ENCODE measurements at regions of chr11 and their contacts with region 1.

Region 1: DNA sequence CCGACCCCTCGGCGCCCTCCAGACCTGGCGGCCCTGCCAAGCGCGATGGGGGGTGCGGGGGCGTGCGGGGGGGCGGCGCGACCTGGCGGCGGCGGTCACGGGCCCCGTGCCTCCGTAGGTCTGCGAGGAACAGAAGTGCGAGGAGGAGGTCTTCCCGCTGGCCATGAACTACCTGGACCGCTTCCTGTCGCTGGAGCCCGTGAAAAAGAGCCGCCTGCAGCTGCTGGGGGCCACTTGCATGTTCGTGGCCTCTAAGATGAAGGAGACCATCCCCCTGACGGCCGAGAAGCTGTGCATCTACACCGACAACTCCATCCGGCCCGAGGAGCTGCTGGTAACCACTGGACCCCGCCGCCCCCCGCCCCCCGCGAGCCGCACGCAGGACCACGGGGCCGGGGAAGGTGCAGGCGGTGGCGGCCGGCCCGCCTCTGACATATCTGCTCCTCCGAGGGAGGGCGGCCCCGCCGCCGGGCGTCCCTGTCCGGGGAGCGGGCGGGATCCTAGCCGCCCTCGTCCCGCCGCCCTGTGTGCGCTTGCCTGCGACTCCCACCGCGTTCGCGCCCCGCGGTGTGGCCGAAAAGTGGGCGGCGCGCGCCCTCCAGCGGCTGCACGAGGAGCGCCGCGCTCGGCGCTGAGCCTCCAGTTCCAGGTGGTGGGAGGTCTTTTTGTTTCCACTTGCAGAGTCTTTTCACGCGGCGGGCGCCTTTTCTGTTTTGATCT is 2.1 kb downstream of the CCND1 start:
- DNase-seq: no peak
- H3K4me3 ChIP-seq: peak overlapping the region; percentile 78 to 90 (median 84)
- H3K27ac ChIP-seq: peak overlapping the region; percentile 89 to 94 (median 92)
- H3K4me1 ChIP-seq: peaks cover 50 to 84% (median 77%) of the 10 kb centered on the region in 4 donors
- H3K27me3 ChIP-seq: peaks cover 3 to 39% (median 7%) of the 10 kb centered on the region in 4 donors
- CTCF ChIP-seq: peak; percentile 93 to 97 (median 94)
- EP300 ChIP-seq: no peak
- POLR2A ChIP-seq: no peak

Region 2: GRCh38 chr11:69101115-69101791 is 541.8 kb before region 1 on chr11:
- intact Hi-C with region 1: loop called (anchors 2 kb)
- DNase-seq: no peak
- H3K4me3 ChIP-seq: no peak overlapping the region
- H3K27ac ChIP-seq: no peak overlapping the region
- H3K4me1 ChIP-seq: peaks cover 5 to 26% (median 21%) of the 10 kb centered on the region in 4 donors
- H3K27me3 ChIP-seq: no peaks in the 10 kb centered on the region
- CTCF ChIP-seq: peak; percentile 97 to 100 (median 97)
- EP300 ChIP-seq: no peak
- POLR2A ChIP-seq: no peak

Region 3: GRCh38 chr11:69131644-69132300 is 511.3 kb before region 1 on chr11:
- intact Hi-C with region 1: loop called (anchors 5 kb)
- DNase-seq: no peak
- H3K4me3 ChIP-seq: no peak overlapping the region
- H3K27ac ChIP-seq: no peak overlapping the region
- H3K4me1 ChIP-seq: peaks cover 15 to 19% (median 18%) of the 10 kb centered on the region in 4 donors
- H3K27me3 ChIP-seq: no peaks in the 10 kb centered on the region
- CTCF ChIP-seq: peak; percentile 69 to 89 (median 86)
- EP300 ChIP-seq: no peak
- POLR2A ChIP-seq: no peak

Region 4: DNA sequence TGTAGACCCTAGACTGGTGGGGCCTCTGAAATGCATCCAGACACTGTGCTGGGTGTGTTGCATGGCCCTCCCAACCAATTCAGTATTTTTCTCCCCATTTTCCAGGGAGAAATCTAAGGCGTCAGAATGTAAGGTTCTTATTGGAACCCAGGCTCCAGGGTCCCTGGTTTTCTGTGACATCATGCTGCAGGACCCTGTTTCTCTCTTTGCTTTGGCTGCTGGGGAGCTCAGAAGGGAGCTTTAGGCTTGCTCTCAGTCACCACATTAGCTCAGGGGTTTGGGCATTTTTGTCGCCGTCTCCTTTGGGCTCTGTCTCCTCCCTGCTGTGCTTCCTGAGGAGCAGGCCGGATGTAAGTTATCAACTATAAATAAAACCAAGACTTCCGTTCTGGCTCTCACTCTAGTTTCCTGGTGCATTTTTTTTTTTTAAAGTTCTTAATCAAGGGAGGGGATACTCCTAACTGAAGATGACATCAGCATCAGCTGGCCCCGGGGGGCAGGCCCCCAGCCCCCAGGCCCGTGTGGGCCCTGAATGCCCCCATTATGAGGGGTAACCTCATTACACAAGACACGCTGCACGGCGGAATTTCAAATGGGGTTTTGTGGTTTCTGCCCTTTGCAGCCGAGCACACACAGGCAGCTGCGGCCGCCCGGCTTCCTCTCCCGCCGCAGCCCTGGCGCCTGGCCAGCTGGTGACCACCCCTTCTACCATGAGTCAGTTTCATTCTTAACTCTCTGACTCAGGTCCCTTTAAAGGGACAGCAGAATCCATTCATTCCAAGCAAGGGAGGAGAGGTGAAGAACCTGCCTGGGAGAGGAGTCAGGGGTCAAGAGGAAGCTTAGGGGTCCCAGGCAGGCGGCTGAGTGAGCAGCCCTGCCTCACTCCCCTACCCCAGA is 345.9 kb before region 1 on chr11:
- intact Hi-C with region 1: loop called (anchors 5 kb)
- DNase-seq: peak; percentile 97
- H3K4me3 ChIP-seq: peak overlapping the region; percentile 26 to 32 (median 28)
- H3K27ac ChIP-seq: peak overlapping the region; percentile 66 to 79 (median 74)
- H3K4me1 ChIP-seq: peaks cover 40 to 72% (median 56%) of the 10 kb centered on the region in 4 donors
- H3K27me3 ChIP-seq: peaks cover 0 to 18% (median 0%) of the 10 kb centered on the region in 4 donors
- CTCF ChIP-seq: no peak
- EP300 ChIP-seq: no peak
- POLR2A ChIP-seq: no peak

Region 5: DNA sequence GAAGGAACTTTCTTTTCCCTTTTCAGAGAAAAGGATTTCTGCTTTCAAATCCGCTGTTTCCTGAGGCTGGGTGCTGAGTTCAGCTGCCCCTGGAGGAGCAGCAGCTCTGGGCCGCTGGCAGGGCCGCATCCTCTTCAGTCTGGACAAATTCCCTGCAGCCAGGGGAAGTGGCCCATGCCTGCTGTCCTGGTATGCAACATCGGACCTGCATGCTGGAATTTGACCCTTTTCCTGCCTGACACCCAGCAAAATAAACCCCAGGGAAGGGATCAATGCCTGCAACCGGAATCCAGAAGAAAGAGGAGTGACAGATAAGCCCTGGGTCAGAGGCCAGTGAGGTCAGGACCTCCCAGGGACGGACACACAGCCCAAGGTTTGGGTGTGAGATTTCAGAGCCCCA is 215.7 kb before region 1 on chr11:
- intact Hi-C with region 1: no loop called
- DNase-seq: no peak
- H3K4me3 ChIP-seq: no peak overlapping the region
- H3K27ac ChIP-seq: no peak overlapping the region
- H3K4me1 ChIP-seq: no peaks in the 10 kb centered on the region
- H3K27me3 ChIP-seq: peaks cover 0 to 11% (median 0%) of the 10 kb centered on the region in 4 donors
- CTCF ChIP-seq: no peak
- EP300 ChIP-seq: no peak
- POLR2A ChIP-seq: no peak

Region 6: DNA sequence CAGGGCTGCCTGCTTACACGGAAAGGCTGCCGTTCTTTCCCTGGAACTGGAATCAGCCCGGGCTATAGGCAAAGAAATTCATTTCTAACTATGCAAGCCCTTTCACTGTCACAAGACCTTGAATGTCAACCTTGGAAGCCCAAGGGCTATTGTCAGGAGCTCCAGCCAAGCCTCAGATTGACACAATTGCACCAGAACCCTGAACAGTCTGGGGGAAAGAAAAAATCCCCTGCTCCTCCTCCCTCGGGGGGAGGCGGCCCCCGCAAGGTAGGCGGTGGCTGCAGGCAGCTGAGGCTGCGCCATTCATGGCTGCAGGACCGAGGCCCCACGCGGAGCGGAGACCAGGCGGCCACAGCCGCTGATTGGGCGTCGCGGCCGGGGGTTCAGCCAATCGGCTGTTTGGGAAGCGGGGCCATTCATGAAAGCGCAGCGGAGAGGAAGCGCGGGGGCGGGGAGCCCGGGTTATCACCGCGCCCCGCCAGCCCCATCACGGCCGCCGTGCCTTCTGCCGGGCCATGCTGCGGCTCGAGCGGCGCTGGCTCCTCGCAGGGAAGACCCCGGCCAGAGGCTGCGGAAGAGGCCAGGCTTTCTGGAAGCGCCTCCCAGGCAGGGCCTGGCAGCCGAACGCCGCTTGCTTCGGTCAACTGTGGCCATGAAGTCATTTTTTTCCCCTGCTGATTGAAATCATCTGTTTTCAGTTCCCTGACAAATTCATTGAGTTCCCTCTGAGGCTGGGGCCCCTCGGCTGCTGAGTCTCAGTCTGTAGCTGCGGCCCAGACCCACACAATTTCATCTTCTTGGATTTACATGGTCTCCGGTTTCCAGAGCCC is 199.7 kb before region 1 on chr11:
- intact Hi-C with region 1: loop called (anchors 10 kb)
- DNase-seq: peak; percentile 97
- H3K4me3 ChIP-seq: peak overlapping the region; percentile 53 to 63 (median 54)
- H3K27ac ChIP-seq: peak overlapping the region; percentile 73 to 87 (median 82)
- H3K4me1 ChIP-seq: peaks cover 34 to 40% (median 36%) of the 10 kb centered on the region in 4 donors
- H3K27me3 ChIP-seq: no peaks in the 10 kb centered on the region
- CTCF ChIP-seq: no peak
- EP300 ChIP-seq: no peak
- POLR2A ChIP-seq: no peak

Region 7: DNA sequence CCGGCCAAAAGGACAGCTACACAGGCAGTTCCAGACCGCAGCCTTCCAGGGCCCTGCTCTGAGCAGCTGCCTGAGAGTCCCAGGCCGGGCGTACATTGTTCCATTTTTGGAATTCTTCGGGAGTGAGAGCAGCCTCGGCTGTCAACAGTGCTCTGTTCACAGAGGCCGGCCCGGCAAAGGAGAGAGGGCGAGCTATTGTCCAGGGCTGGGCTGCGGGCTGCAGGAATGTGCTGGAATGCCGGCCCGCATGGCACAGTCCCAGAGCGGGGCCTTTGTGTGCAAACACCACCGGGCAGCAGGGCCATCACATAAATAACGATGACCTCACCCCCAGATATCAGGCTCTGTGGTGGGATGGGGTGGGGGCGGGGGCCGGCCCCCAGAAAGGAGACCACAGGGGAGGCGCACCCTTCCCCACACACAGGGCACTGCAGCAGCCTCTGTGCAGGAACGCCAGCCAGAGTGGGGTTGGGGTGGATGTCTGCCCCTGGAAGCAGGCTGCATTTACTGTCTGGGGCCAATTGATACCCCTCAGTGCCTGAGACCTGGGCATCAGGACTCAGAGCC is 145.8 kb before region 1 on chr11:
- intact Hi-C with region 1: loop called (anchors 5 kb)
- DNase-seq: no peak
- H3K4me3 ChIP-seq: no peak overlapping the region
- H3K27ac ChIP-seq: peak overlapping the region; percentile 81 to 86 (median 84)
- H3K4me1 ChIP-seq: peaks cover 21 to 49% (median 38%) of the 10 kb centered on the region in 4 donors
- H3K27me3 ChIP-seq: no peaks in the 10 kb centered on the region
- CTCF ChIP-seq: no peak
- EP300 ChIP-seq: no peak
- POLR2A ChIP-seq: no peak